Mucosa of descending colon (tissue), 3 donors: ENCODE measurements at regions of chr13 and their contacts with region 1.

Region 1: GRCh38 chr13:74145249-74145975 is 11.2 kb upstream of the KLF12 start:
- DNase-seq: no peak
- ATAC-seq: no peak
- H3K4me3 ChIP-seq: no peak overlapping the region
- H3K4me1 ChIP-seq: no peaks in the 10 kb centered on the region
- CTCF ChIP-seq: no peak

Region 2: GRCh38 chr13:74270018-74270417 is 124.6 kb after region 1 on chr13:
- intact Hi-C with region 1: loop called in 1 of 2 experiments (anchors 10 kb)
- DNase-seq: no peak
- ATAC-seq: peak; percentile 19
- H3K4me3 ChIP-seq: no peak overlapping the region
- H3K4me1 ChIP-seq: no peaks in the 10 kb centered on the region
- CTCF ChIP-seq: no peak